Activated CD4-positive, alpha-beta memory T cell treated with anti-CD3 and anti-CD28 coated beads for 36 hours (primary cell): ENCODE measurements at regions of chr4 and their contacts with region 1.

Region 1: DNA sequence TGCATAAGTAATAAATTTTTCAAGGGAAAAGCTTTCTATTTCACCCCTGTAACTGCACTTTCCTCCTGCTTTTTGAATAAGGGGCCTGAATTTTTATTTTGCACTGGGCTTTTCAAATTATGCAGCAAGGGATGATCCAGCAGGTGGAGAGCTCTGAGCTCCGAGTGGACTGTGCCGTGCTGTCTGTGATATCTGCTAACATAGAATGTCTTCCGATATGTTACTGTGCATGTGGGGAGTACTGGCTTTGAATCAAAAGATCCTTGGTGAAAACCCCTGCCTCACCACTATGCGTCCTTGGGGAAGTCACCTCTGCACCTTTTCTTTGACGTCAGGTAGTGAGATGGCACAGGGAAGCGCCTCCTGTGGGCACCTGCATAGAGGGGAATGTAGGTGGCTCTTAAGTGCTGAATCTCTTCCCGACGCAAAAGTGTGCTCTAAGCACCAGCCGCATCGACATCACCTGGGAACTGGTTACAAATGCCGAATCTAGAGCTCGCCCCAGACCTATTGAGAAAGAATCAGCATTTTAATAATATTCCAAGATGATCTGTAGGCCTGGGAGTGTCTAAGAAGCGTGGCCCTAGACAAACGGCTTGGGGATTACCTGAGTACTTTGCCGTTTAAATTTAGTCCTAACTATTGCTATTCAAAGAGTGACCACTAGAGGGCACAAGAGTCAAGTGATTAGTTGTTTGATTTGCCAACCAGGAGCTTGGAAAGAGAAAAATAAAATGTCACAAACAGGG is 19.2 kb upstream of the WFS1 start:
- DNase-seq: no peak
- H3K4me3 Mint-ChIP-seq: no peak overlapping the region
- H3K27ac Mint-ChIP-seq: no peak overlapping the region
- H3K4me1 Mint-ChIP-seq: no peaks in the 10 kb centered on the region
- H3K27me3 Mint-ChIP-seq: peaks cover 24% of the 10 kb centered on the region

Region 2: GRCh38 chr4:5693871-5694270 is 556.5 kb before region 1 on chr4:
- CTCF ChIA-PET with region 1: no interaction called
- POLR2A ChIA-PET with region 1: no interaction called
- intact Hi-C with region 1: no loop called
- DNase-seq: no peak
- H3K4me3 Mint-ChIP-seq: no peak overlapping the region
- H3K27ac Mint-ChIP-seq: no peak overlapping the region
- H3K4me1 Mint-ChIP-seq: no peaks in the 10 kb centered on the region
- H3K27me3 Mint-ChIP-seq: no peaks in the 10 kb centered on the region

Region 3: DNA sequence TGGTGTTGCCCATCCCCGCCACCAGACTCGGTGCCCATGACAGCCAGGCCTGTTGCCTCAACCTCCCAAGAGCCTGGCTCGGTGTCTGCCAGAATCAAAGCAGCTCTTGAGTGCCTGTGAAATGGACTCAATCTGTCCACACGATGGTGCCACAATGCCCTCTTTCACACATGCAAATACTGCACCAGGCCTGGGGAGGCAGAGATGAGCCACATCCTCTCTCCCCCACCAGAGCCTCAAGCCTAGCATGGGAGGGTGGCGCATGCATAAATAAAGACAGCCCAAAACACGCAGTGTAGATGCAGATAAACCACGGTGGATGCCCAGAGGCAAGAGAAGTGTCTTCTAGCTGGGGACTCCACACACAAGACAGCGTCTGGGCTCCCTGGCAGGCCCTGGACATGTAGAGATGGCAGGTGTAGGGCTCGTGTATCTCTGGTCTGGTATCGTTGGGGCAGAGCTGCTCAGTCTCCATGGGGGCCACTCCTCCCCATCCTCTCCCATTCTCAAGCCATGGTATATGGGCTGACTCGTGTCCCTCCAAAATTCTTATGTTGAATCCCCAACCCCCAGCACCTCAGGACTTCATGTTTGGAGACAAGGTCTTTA is 115.7 kb before region 1 on chr4:
- CTCF ChIA-PET with region 1: interaction called, 79 read pairs
- POLR2A ChIA-PET with region 1: no interaction called
- intact Hi-C with region 1: no loop called
- DNase-seq: peak; percentile 73
- H3K4me3 Mint-ChIP-seq: no peak overlapping the region
- H3K27ac Mint-ChIP-seq: no peak overlapping the region
- H3K4me1 Mint-ChIP-seq: peaks cover 8% of the 10 kb centered on the region
- H3K27me3 Mint-ChIP-seq: no peaks in the 10 kb centered on the region

Region 4: GRCh38 chr4:6225469-6225868 is 24.9 kb before region 1 on chr4:
- CTCF ChIA-PET with region 1: interaction called, 11 read pairs
- POLR2A ChIA-PET with region 1: no interaction called
- intact Hi-C with region 1: no loop called
- DNase-seq: peak; percentile 28
- H3K4me3 Mint-ChIP-seq: no peak overlapping the region
- H3K27ac Mint-ChIP-seq: no peak overlapping the region
- H3K4me1 Mint-ChIP-seq: no peaks in the 10 kb centered on the region
- H3K27me3 Mint-ChIP-seq: peaks cover 34% of the 10 kb centered on the region

Region 5: DNA sequence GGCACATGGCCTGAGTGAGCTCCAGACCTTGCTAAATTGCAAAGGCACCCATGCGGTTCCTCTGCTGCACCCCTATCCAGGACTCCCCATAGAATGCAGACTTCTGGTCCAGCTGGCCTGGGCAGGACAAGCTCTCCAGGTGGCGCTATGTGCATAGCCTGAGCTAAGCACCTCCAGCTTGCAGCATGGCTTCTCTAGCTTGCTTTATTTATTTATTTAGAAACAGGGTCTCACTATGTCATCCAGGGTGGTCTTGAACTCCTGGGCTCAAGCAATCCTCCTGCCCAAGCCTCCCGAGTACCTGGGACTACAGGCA is 13.8 kb after region 1 on chr4:
- CTCF ChIA-PET with region 1: interaction called, 64 read pairs
- POLR2A ChIA-PET with region 1: no interaction called
- intact Hi-C with region 1: no loop called
- DNase-seq: peak; percentile 46
- H3K4me3 Mint-ChIP-seq: no peak overlapping the region
- H3K27ac Mint-ChIP-seq: no peak overlapping the region
- H3K4me1 Mint-ChIP-seq: peaks cover 5% of the 10 kb centered on the region
- H3K27me3 Mint-ChIP-seq: peaks cover 14% of the 10 kb centered on the region

Region 6: GRCh38 chr4:6546681-6547447 is 296.5 kb after region 1 on chr4:
- CTCF ChIA-PET with region 1: interaction called, 11 read pairs
- POLR2A ChIA-PET with region 1: no interaction called
- intact Hi-C with region 1: loop called (anchors 5 kb)
- DNase-seq: peak; percentile 54
- H3K4me3 Mint-ChIP-seq: no peak overlapping the region
- H3K27ac Mint-ChIP-seq: no peak overlapping the region
- H3K4me1 Mint-ChIP-seq: no peaks in the 10 kb centered on the region
- H3K27me3 Mint-ChIP-seq: peaks cover 33% of the 10 kb centered on the region